WTC11 (cell line): ENCODE measurements at regions of chr18 and their contacts with region 1.

Region 1: GRCh38 chr18:49041435-49042245 is 90.9 kb upstream of the SMAD7 start:
- DNase-seq: peak; percentile 64
- ATAC-seq: peak; percentile 87
- H3K4me3 Mint-ChIP-seq: no peak overlapping the region
- H3K27ac Mint-ChIP-seq: no peak overlapping the region
- H3K4me1 Mint-ChIP-seq: peaks cover 11% of the 10 kb centered on the region
- H3K27me3 Mint-ChIP-seq: no peaks in the 10 kb centered on the region; the same call in 1 of the 2 replicates
- CTCF ChIP-seq: no peak

Region 2: DNA sequence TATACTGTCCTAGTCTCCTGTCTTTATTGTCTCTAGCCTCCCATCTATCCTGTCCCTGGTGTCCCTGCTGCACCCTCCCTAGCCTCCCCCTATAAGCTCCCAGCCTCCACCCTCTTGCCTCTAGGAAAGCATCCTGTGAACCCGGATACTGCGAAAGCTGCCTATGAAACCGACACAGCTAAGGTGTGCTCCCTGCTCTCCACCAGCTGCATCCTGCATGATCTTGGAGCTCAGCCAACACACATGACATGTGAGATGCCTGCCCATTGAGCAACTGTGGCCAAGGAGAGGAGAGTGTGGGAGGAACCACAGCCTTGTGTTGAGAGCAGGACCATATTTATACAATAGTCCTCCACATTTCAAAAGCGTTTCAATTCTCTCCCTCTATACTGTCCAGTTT is 819.5 kb before region 1 on chr18:
- CTCF ChIA-PET with region 1: no interaction called
- POLR2A ChIA-PET with region 1: no interaction called
- DNase-seq: no peak
- ATAC-seq: no peak
- H3K4me3 Mint-ChIP-seq: no peak overlapping the region
- H3K27ac Mint-ChIP-seq: no peak overlapping the region
- H3K4me1 Mint-ChIP-seq: peaks cover 6% of the 10 kb centered on the region
- H3K27me3 Mint-ChIP-seq: no peaks in the 10 kb centered on the region; the same call in 1 of the 2 replicates
- CTCF ChIP-seq: no peak

Region 3: GRCh38 chr18:48951448-48952286 is 90.0 kb before region 1 on chr18:
- CTCF ChIA-PET with region 1: interaction called, 11 read pairs
- POLR2A ChIA-PET with region 1: no interaction called
- DNase-seq: peak; percentile 76
- ATAC-seq: peak; percentile 22
- H3K4me3 Mint-ChIP-seq: peak overlapping the region; percentile 91
- H3K27ac Mint-ChIP-seq: peak overlapping the region; percentile 99
- H3K4me1 Mint-ChIP-seq: peaks cover 52% of the 10 kb centered on the region
- H3K27me3 Mint-ChIP-seq: peaks cover 5% of the 10 kb centered on the region
- CTCF ChIP-seq: no peak

Region 4: GRCh38 chr18:49021433-49022129 is 20.1 kb before region 1 on chr18:
- CTCF ChIA-PET with region 1: interaction called, 40 read pairs
- POLR2A ChIA-PET with region 1: no interaction called
- DNase-seq: peak; percentile 86
- ATAC-seq: peak; percentile 93
- H3K4me3 Mint-ChIP-seq: no peak overlapping the region
- H3K27ac Mint-ChIP-seq: peak overlapping the region; percentile 85
- H3K4me1 Mint-ChIP-seq: peaks cover 12% of the 10 kb centered on the region
- H3K27me3 Mint-ChIP-seq: no peaks in the 10 kb centered on the region; the same call in 1 of the 2 replicates
- CTCF ChIP-seq: peak; percentile 44

Region 5: DNA sequence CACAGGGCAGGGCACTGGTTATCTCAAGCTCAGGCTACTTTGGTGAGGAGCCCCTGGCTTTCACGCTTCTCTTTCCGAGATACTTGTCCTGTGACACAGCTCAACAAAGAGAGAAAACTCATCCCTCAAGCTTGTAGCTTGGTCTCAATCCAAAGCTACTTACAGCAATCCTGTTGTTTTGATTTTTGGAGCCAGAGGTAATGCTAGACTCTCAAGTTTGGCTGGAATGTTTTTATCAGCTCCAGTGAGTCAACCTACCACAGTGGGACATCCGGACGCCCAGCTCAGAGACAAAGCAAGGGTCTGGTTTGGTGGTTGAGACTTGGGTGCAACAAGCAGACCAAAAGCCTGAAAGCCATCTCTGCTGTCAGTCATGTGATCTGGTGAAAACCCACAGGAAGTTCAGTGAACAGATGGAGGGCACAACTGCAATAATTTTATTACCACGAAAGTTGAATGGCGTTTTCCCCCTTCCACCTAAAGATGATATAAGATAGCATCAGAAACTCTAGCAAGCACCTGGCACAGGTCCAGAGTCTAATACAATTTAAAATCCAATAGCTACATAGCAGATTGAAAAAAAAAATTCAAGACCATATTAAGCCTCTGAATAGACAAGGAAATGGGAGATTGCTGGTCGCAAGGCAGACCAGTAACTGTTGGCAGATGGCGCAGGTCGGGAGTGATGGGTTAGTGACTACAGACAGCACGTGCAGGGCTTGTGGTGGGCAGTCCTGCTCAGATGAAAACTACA is 11.4 kb after region 1 on chr18:
- CTCF ChIA-PET with region 1: interaction called, 17 read pairs
- POLR2A ChIA-PET with region 1: no interaction called
- DNase-seq: no peak
- ATAC-seq: no peak
- H3K4me3 Mint-ChIP-seq: no peak overlapping the region
- H3K27ac Mint-ChIP-seq: no peak overlapping the region
- H3K4me1 Mint-ChIP-seq: peaks cover 6% of the 10 kb centered on the region
- H3K27me3 Mint-ChIP-seq: no peaks in the 10 kb centered on the region
- CTCF ChIP-seq: no peak

Region 6: DNA sequence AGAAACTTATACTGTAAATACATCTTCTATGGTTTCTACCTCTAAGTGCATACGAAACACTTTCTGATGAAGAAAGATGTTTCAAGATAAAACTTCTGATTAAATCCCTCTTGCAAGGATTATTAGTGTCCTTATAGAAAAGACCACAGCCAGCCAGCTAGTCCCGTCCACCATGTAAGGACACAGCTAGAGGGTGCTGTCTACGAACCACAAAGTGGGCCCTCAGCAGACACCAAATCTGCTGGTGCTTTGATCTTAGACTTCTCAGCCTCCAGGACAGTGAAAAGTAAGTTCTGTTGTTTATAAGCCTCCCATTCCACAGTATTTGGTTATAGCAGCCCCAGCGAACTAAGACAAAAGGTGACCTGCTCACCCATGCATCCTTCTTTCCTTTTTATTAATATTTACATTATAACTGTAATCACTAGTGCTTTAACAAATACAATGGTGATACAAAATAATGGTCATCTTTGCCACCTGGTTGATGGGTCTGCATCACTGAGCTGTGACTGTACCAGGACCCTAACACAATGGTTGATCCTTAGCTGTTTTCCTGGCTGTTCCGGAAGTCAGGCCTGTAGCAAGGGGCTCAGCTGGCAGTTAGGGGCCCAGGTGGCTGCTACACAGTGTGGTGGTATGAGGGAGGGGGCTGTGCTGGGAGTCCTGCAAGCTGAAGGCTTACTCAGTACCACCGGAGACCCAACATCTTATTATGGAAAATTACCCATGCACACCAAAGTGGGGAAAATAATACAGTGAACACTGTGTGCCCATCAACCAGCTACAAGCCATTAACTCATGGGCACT is 17.6 kb after region 1 on chr18:
- CTCF ChIA-PET with region 1: interaction called, 13 read pairs
- POLR2A ChIA-PET with region 1: no interaction called
- DNase-seq: no peak
- ATAC-seq: peak; percentile 51; the same call in 1 of the 2 replicates
- H3K4me3 Mint-ChIP-seq: no peak overlapping the region
- H3K27ac Mint-ChIP-seq: no peak overlapping the region
- H3K4me1 Mint-ChIP-seq: peaks cover 28% of the 10 kb centered on the region
- H3K27me3 Mint-ChIP-seq: no peaks in the 10 kb centered on the region
- CTCF ChIP-seq: no peak